Prostate gland (tissue), 2 donors: ENCODE measurements at regions of chr5 and their contacts with region 1.

Region 1: DNA sequence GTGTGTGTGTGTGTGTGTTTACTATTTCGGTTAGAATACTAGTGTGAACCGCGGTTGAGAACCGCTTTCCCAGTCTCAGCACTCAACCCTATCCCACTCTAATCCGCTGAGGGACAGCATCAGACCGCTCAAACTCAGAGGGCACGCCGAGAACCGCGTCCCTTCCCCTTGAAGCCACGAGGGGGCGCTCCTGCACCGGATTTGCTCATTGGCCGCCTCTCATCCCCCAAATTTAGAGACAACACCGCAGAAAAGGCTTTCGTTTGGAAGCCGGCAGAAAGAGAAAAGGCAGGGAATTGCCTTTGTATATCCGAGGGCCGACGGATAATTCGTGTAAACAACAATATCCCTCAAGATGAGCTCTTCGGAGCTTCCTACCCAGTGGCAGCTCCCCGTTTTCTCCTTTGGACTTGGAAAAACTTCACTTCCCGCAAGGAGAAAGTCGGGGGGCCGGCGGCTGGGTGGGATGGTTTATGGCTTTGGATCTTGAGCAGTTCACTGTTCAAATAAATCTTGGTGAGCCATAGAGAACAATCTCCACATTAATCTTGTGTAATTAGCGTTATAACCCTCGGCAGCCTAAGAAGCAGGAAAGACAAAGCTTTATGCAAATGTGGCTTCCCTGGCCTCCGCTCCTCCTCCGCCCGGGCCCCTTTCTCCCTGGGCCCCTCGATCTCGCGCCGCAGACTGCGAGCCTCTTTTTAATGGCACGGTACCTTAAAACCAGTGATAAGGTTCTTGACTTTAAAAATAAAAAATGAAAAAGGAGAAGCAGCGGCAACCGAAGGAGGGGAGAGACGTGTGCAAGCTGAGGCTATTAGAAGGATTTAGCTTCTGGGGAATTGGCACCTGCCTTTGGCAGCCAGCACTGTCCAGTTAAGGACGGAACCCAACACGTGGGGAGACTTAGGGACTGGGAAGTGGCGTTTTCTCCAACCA is 296.8 kb downstream of the PARP8 start:
- DNase-seq: peak; percentile 63
- H3K4me3 ChIP-seq: peak overlapping the region; percentile 38 to 40
- H3K27ac ChIP-seq: peak overlapping the region; percentile 77 to 83
- H3K4me1 ChIP-seq: no peaks in the 10 kb centered on the region
- H3K27me3 ChIP-seq: no peaks in the 10 kb centered on the region
- CTCF ChIP-seq: peak; percentile 86 to 94 (median 90)
- POLR2A ChIP-seq: no peak

Region 2: DNA sequence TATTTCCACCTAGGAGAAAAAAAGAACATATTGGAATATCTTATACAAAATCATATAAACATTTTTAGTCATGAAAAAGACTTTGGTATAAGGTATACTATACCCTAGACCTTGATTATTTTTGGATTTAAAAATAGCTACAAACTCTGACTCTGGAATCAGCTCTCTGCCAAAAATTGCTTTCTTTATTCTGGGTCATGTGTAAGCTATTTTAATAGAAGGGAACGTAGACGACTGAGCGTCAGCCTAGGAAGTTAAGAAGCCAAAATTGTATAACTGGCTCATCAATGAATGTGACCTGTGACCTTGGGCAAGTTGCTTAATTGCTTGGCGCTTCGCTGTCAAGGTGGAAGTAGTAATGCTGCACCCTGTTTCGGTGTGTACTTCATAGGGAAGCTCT is 139.6 kb before region 1 on chr5:
- intact Hi-C with region 1: no loop called
- DNase-seq: no peak
- H3K4me3 ChIP-seq: no peak overlapping the region
- H3K27ac ChIP-seq: no peak overlapping the region
- H3K4me1 ChIP-seq: no peaks in the 10 kb centered on the region
- H3K27me3 ChIP-seq: no peaks in the 10 kb centered on the region
- CTCF ChIP-seq: no peak
- POLR2A ChIP-seq: no peak

Region 3: DNA sequence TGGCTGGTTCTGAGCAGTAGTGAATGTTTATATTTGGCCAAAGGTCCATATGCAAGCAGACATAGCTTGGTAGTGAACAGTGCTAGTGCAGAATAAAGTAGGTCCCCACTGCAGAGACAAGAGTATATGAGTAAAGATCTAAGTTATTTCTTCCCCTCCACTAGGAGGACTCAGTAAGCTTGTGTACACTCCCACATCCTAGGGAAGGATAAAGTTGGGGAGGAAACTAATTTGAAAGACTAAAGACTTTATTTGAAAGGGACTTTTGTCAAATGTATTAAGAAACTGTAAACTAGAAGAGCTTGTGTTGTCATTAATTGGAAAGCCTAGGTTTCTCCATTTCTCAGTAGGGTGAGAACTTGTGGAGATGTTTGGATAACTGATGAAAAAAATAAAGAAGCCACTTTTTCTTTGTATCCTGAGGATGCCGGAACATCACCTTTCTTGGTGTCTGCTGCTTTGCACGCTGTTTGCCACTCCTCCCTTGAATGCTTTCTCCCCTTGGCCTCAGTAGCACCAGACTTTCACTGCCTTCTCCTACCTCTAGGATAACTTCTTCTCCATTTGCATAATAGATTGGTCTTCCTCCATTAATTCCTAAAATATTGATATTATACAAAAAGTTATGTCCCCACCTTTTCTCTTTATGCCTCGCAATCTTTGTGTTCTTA is 32.2 kb after region 1 on chr5:
- intact Hi-C with region 1: no loop called
- DNase-seq: no peak
- H3K4me3 ChIP-seq: no peak overlapping the region
- H3K27ac ChIP-seq: no peak overlapping the region
- H3K4me1 ChIP-seq: no peaks in the 10 kb centered on the region
- H3K27me3 ChIP-seq: no peaks in the 10 kb centered on the region
- CTCF ChIP-seq: no peak
- POLR2A ChIP-seq: no peak

Region 4: DNA sequence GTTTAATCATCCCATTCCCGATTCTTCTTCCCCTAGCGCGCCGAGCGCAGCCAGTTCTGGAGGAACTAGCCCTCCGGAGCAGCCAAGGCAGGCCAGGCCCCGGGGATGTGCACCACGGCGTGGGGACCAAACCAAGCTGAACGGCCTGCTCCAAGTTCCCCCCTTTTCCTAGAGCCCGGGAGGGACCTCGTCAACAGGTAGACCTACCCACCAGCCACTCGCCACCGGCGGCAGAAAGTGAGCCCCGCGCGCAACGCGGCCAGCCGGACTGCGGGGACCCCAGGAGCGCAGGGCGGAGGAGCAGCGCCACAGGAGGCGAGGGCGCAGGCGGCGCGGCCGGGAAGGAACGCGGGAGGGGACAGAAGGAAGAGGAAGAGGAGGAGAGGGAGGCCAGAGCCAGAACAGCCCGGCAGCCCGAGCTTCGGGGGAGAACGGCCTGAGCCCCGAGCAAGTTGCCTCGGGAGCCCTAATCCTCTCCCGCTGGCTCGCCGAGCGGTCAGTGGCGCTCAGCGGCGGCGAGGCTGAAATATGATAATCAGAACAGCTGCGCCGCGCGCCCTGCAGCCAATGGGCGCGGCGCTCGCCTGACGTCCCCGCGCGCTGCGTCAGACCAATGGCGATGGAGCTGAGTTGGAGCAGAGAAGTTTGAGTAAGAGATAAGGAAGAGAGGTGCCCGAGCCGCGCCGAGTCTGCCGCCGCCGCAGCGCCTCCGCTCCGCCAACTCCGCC is 419.7 kb after region 1 on chr5 and contains the start of gene ISL1:
- intact Hi-C with region 1: loop called (anchors 2 kb)
- DNase-seq: peak; percentile 29
- H3K4me3 ChIP-seq: peak within 1 kb of the TSS; percentile 42 to 51
- H3K27ac ChIP-seq: peak within 1 kb of the TSS; percentile 83 to 90
- H3K4me1 ChIP-seq: no peaks in the 10 kb centered on the region
- H3K27me3 ChIP-seq: peaks cover 6% of the 10 kb centered on the region
- CTCF ChIP-seq: peak in 1 of 4 experiments; percentile 9
- POLR2A ChIP-seq: peak; percentile 95
- total RNA-seq, gene ISL1: 5.5 to 15.2 TPM

Region 5: GRCh38 chr5:51960617-51961115 is 997.5 kb after region 1 on chr5:
- intact Hi-C with region 1: loop called (anchors 5 kb)
- DNase-seq: no peak
- H3K4me3 ChIP-seq: no peak overlapping the region
- H3K27ac ChIP-seq: no peak overlapping the region
- H3K4me1 ChIP-seq: no peaks in the 10 kb centered on the region
- H3K27me3 ChIP-seq: no peaks in the 10 kb centered on the region
- CTCF ChIP-seq: peak; percentile 15 to 80 (median 55)
- POLR2A ChIP-seq: no peak

Region 6: GRCh38 chr5:52657247-52657645 is 1694.0 kb after region 1 on chr5:
- intact Hi-C with region 1: loop called (anchors 5 kb)
- DNase-seq: no peak
- H3K4me3 ChIP-seq: no peak overlapping the region
- H3K27ac ChIP-seq: no peak overlapping the region
- H3K4me1 ChIP-seq: no peaks in the 10 kb centered on the region
- H3K27me3 ChIP-seq: no peaks in the 10 kb centered on the region
- CTCF ChIP-seq: peak in 3 of 4 experiments; percentile 53 to 68 (median 62)
- POLR2A ChIP-seq: no peak

Region 7: DNA sequence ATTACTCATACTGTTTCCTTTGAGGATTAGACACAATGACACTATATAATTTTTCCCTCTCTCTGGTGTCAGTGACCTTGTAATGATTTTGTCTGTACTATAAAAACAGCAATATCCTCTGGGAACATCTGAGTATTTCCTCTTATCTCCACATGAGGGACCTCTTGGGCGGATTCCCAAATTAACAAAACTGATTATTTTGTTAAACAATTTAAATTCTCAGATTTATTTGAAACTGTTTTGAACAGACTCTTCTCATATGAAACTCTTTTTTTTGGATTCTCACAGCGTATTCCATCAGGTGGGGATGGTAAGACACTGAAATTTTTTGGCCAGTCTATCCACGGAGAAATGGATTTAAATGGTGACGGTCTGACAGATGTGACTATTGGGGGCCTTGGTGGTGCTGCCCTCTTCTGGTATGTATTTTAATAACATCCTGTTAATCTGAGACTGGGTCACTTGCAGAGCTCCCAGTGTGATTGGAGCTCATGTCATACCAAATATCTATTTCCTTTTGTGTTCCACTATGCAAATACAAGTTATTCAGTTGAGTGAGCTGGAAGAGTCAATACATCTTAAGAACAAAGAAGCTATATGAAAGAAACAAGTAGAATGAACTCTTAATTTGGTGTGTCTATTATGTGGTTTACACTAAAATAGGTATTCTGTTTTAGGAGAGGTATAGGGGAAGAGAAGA is 1952.1 kb after region 1 on chr5:
- intact Hi-C with region 1: loop called (anchors 5 kb)
- DNase-seq: peak; percentile 48
- H3K4me3 ChIP-seq: peak overlapping the region in 1 of 2 donors; percentile 2
- H3K27ac ChIP-seq: no peak overlapping the region
- H3K4me1 ChIP-seq: no peaks in the 10 kb centered on the region
- H3K27me3 ChIP-seq: no peaks in the 10 kb centered on the region
- CTCF ChIP-seq: peak; percentile 70 to 73 (median 71)
- POLR2A ChIP-seq: no peak